Panc1 (cell line): ENCODE measurements at regions of chr11 and their contacts with region 1.

Region 1: GRCh38 chr11:17046690-17047089 is 30.8 kb downstream of the RPS13 start:
- DNase-seq: no peak
- ATAC-seq: no peak
- H3K4me3 ChIP-seq: no peak overlapping the region
- H3K27ac ChIP-seq: no peak overlapping the region
- H3K4me1 ChIP-seq: no peaks in the 10 kb centered on the region; the same call in 1 of the 2 replicates
- H3K27me3 ChIP-seq: peaks cover 5% of the 10 kb centered on the region
- CTCF ChIP-seq: no peak

Region 2: DNA sequence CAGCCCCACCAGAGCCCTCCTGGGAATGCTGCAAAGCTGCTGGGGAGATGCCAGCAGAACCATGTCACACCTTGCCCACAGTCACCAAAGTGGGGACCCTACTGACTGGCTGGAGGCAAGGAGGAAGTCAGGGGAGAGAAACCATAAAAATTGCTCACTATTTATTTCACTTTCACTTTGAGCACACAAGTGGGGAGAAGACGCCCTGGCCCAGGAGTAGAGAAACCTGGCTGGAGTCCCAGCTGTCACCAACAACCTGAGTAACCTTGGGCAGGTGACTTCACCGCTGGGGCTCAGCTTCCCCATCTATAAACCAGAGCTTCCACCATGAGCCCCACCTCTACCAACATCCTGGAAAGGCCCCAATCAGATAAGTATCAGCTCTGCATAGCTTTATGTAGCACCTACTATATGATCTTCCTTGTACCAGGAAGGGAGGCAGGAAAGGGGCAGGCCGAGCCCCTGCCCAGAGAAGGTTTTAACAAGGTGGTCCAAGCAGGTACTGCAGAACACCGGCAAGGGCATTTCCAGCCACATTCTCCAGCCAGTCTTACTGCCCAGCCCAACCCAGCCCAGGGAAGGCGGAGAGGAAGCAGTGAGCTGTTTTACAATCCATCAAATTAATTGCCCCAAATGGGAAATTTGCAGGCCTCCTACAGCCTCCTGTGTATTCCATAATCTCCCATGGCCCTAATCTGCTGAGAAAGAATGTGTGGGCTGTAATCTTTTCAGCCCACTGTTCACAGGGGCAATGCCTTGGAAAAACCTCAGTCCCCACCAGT is 60.1 kb before region 1 on chr11:
- CTCF ChIA-PET with region 1: no interaction called
- POLR2A ChIA-PET with region 1: interaction called, 13 read pairs
- in situ Hi-C with region 1: no loop called
- intact Hi-C with region 1: no loop called
- DNase-seq: no peak
- ATAC-seq: peak; percentile 41; the same call in 1 of the 2 replicates
- H3K4me3 ChIP-seq: no peak overlapping the region
- H3K27ac ChIP-seq: peak overlapping the region; percentile 37; the same call in 1 of the 2 replicates
- H3K4me1 ChIP-seq: peaks cover 28% of the 10 kb centered on the region
- H3K27me3 ChIP-seq: no peaks in the 10 kb centered on the region
- CTCF ChIP-seq: no peak

Region 3: DNA sequence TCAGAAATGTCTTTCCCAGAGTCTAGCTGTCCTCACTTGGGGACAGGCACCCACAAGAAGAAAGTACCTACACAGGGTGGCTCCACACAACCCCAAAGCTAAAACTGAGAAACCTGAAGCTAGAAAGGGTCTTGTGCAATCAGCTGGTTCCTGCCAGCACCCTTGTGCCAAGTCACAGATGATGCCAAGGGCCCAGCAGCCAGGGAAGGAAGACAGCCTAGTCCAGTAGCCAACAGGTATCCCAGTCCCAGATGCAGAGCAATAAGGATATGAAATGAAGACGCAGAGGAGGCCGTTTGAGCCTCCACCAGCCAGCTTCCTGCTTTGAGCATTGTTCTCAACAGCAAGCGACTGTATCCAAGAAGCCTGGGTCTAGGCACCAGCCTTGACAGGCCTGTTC is 38.6 kb before region 1 on chr11:
- CTCF ChIA-PET with region 1: no interaction called
- POLR2A ChIA-PET with region 1: no interaction called
- in situ Hi-C with region 1: no loop called
- intact Hi-C with region 1: no loop called
- DNase-seq: no peak
- ATAC-seq: no peak
- H3K4me3 ChIP-seq: no peak overlapping the region
- H3K27ac ChIP-seq: no peak overlapping the region
- H3K4me1 ChIP-seq: peaks cover 10% of the 10 kb centered on the region; the same call in 1 of the 2 replicates
- H3K27me3 ChIP-seq: no peaks in the 10 kb centered on the region
- CTCF ChIP-seq: no peak